Caco-2 (cell line): ENCODE measurements at regions of chr3 and their contacts with region 1.

Region 1: DNA sequence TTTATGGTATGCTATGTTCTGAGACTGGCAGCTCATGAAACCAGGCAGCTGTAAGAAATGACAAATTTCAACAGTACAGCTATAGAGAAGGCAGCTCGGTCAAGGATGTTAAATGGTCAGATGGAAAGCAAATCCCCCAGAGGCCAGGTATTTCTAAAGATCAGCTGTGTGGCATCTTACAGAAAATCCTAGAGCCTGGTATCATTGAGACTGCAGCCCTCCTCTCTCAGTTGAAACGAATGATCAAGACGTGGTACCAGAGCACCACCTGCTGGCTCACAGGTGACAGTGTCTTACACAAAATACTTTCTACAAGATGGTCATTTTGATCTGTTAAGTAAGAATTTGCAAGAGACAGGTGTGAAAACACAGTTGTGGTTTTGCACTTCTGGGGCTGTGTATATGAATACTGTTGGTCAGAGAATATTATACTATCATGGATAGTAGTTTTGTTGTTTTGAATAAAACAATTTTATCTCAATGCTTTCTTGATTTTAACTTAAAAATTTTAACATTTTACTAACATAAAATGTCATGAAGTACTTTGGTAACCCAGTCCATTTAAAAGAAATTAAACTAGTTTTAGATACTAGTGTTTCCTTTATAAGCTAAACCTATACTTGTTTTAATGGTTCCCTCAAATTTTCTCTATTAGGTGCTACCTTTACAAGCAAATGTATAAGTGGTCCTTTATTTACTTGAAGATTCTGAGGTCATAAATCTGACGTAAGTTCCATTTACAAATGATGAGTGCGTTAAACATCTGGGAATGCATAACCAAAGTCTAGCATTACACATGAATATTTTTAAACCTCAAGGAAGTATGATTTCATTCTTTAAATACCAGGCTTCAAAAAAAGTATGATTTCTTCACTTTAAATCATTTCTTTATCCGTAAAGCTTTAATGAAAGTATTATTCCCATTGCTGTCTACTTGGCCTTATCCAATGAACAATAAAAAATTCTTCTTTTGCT is 121.8 kb downstream of the PDZRN3 start:
- DNase-seq: peak; percentile 71 to 72
- H3K4me3 ChIP-seq: no peak overlapping the region
- H3K4me3 Mint-ChIP-seq: no peak overlapping the region
- H3K27ac Mint-ChIP-seq: no peak overlapping the region
- H3K4me1 ChIP-seq: peaks cover 14% of the 10 kb centered on the region
- H3K4me1 Mint-ChIP-seq: no peaks in the 10 kb centered on the region
- H3K27me3 ChIP-seq: no peaks in the 10 kb centered on the region
- H3K27me3 Mint-ChIP-seq: no peaks in the 10 kb centered on the region
- CTCF ChIP-seq: peak; percentile 72 to 85

Region 2: GRCh38 chr3:73192035-73192738 is 310.7 kb before region 1 on chr3:
- CTCF ChIA-PET with region 1: no interaction called
- POLR2A ChIA-PET with region 1: no interaction called
- intact Hi-C with region 1: loop called (anchors 1 kb)
- DNase-seq: peak; percentile 56 to 58
- H3K4me3 ChIP-seq: no peak overlapping the region
- H3K4me3 Mint-ChIP-seq: no peak overlapping the region
- H3K27ac Mint-ChIP-seq: no peak overlapping the region
- H3K4me1 ChIP-seq: no peaks in the 10 kb centered on the region
- H3K4me1 Mint-ChIP-seq: no peaks in the 10 kb centered on the region
- H3K27me3 ChIP-seq: no peaks in the 10 kb centered on the region
- H3K27me3 Mint-ChIP-seq: no peaks in the 10 kb centered on the region
- CTCF ChIP-seq: peak; percentile 57 to 66

Region 3: DNA sequence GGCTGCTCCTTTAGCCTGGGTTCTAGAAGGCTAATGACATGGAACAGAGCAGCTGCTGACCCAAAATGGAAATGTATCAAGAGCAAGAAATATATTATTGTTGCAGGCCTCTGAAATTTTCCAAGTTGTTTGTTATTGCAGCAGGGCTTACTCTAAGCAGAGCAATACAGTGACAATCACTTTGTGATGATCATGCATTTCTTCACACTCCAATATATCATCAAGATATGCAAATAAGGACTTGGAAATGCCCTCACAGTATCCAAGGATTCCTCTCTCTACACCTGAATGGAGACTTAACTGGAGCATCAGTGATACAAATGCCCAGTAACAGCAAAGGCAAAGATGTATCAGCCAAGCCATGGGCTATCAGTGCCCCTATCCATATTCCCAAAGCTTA is 32.2 kb after region 1 on chr3:
- CTCF ChIA-PET with region 1: no interaction called
- POLR2A ChIA-PET with region 1: no interaction called
- intact Hi-C with region 1: no loop called
- DNase-seq: no peak
- H3K4me3 ChIP-seq: no peak overlapping the region
- H3K4me3 Mint-ChIP-seq: no peak overlapping the region
- H3K27ac Mint-ChIP-seq: no peak overlapping the region
- H3K4me1 ChIP-seq: peaks cover 11% of the 10 kb centered on the region; the same call in 1 of the 2 replicates
- H3K4me1 Mint-ChIP-seq: peaks cover 13% of the 10 kb centered on the region
- H3K27me3 ChIP-seq: no peaks in the 10 kb centered on the region
- H3K27me3 Mint-ChIP-seq: no peaks in the 10 kb centered on the region
- CTCF ChIP-seq: no peak

Region 4: GRCh38 chr3:73586190-73586589 is 83.3 kb after region 1 on chr3:
- CTCF ChIA-PET with region 1: no interaction called
- POLR2A ChIA-PET with region 1: no interaction called
- intact Hi-C with region 1: no loop called
- DNase-seq: no peak
- H3K4me3 ChIP-seq: no peak overlapping the region
- H3K4me3 Mint-ChIP-seq: no peak overlapping the region
- H3K27ac Mint-ChIP-seq: no peak overlapping the region
- H3K4me1 ChIP-seq: peaks cover 5% of the 10 kb centered on the region; the same call in 1 of the 2 replicates
- H3K4me1 Mint-ChIP-seq: no peaks in the 10 kb centered on the region
- H3K27me3 ChIP-seq: no peaks in the 10 kb centered on the region
- H3K27me3 Mint-ChIP-seq: no peaks in the 10 kb centered on the region
- CTCF ChIP-seq: no peak

Region 5: GRCh38 chr3:73933585-73933984 is 430.7 kb after region 1 on chr3:
- CTCF ChIA-PET with region 1: no interaction called
- POLR2A ChIA-PET with region 1: no interaction called
- intact Hi-C with region 1: no loop called
- DNase-seq: no peak
- H3K4me3 ChIP-seq: no peak overlapping the region
- H3K4me3 Mint-ChIP-seq: no peak overlapping the region
- H3K27ac Mint-ChIP-seq: no peak overlapping the region
- H3K4me1 ChIP-seq: no peaks in the 10 kb centered on the region
- H3K4me1 Mint-ChIP-seq: no peaks in the 10 kb centered on the region
- H3K27me3 ChIP-seq: no peaks in the 10 kb centered on the region
- H3K27me3 Mint-ChIP-seq: peaks cover 5% of the 10 kb centered on the region
- CTCF ChIP-seq: no peak